Cardiac septum (tissue), 1 donor: ENCODE measurements at regions of chr7 and their contacts with region 1.

Region 1: DNA sequence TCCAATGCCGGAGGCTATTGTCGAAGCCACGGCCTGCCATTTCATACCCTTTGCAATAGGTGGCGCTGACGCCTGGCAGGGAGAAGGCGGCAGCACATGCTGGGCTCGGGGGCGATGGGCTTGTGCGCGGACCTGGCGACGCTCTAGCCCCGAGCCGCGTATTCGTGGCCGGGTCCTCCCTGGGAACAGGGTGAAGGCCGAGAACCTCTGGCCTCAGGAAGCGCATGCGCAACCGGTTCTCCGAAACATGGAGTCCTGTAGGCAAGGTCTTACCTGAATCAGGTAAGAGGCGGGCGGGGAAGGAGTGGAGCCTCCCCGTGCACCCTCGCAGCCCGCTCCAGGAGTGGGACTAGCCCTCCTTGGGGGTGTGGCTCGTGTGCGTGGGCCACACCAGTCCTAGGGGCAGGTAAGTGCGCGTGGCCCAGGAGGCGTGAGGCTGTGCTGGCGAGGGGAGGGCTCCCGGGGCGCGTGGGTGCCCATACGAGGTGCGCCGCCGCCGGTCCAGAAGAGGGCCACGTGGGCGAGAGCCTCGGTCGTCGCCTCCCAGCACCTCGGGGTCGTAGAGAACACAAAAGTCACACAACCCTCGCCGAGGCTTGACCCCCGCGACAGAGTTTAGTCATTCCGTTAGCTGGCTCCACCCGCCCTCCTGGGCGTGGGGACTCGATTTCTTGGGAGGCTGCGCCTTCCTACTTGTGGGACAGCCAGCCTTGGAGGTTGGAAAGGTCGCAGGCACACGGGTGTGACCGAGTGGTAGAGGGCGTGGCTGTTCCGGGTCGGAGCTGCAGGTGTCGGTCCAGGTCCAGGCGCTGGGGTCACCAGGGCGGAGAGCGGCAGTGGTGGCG is 5.5 kb upstream of the MEST start:
- DNase-seq: no peak

Region 2: DNA sequence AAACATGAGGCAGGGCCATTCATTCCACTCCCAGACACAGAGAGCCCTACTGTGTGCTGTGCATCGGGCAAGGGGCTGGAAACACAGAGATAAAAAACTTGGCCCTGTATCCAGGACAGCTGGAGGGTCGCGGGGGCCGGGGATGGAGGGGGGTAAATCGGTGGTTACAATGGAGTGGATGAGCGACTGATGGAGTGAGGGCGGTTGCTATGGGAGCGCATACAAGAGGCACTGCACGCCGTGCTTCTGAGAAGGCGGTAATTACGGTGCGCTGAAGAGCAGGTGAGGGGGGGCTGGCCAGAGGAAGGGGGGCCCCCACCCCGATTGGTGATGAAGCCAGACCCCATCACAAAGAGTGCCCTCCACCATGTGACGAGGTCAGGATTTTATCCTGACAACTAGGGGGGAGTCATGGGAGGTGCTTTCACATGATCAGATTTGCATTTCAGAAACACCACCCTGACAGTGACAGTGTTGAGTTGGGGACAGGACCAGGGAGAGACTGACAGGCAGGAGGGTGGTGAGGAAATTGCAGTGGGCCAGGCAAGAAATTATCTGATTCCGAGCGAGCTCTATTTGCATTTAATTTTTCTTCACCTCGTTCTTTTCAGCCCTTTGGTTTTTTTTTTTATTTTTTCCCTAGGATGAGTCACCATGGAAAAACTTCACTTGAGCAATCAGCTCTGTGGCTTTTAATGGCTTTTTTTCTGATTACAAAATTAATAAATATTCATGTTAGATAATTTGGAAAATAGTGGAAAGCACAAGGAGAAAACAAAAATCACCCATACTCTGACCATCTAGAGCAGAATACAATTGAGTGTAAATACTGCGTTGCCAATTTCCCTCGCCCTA is 133.9 kb before region 1 on chr7:
- intact Hi-C with region 1: loop called (anchors 5 kb)
- DNase-seq: peak; percentile 67

Region 3: DNA sequence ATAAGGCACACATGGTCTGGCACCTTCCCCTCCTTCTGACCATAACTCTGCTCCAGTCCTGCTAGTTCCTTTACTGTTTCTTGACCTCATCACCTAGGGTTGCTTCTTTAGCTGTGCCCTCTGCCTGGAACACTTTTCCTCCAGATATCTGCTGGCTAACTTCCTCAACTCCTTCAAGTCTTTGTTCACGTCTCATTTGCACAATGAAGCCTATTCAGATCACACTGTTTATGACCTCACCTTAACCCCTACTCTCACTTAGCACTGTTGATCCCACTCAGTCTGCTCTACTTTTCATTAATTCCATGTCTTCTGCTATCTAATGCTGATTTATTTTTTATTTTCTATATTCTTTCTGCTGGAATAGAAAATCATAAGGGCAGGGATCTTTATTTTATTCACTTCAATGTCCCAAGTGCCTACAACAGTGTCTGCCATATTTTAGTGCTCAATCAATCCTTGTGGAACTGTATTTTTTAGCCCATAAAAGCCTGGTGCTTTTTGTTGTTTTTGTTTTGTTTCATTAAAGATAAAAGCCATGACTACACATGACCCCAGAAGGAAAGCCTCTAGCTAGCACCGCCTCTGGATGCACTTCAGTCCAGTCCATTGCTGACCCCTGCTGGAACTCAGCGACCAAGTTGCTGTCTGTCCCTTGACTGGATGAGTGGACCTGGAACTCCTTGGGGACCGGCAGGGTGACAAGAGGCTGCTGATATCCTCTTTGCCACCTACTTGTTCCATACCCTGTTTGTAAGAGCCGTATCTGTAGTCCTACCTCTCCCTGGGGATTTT is 235.3 kb after region 1 on chr7:
- intact Hi-C with region 1: loop called (anchors 5 kb)
- DNase-seq: no peak